A549 (cell line): ENCODE measurements at regions of chr11 and their contacts with region 1.

Region 1: GRCh38 chr11:2036863-2037486 is 39.3 kb upstream of the H19 start:
- DNase-seq: no peak
- ATAC-seq: peak; percentile 44 to 85; a peak in 3 of 6 replicates
- H3K4me3 ChIP-seq: no peak overlapping the region
- H3K27ac ChIP-seq: no peak overlapping the region
- H3K4me1 ChIP-seq: no peaks in the 10 kb centered on the region
- CTCF ChIP-seq: no peak
- EP300 ChIP-seq: no peak
- POLR2A ChIP-seq: no peak
- RAD21 ChIP-seq: no peak

Region 2: GRCh38 chr11:1714973-1715885 is 321.7 kb before region 1 on chr11:
- CTCF ChIA-PET with region 1: no interaction called
- POLR2A ChIA-PET with region 1: no interaction called
- DNase-seq: no peak
- ATAC-seq: no peak
- H3K4me3 ChIP-seq: no peak overlapping the region
- H3K27ac ChIP-seq: no peak overlapping the region
- H3K4me1 ChIP-seq: no peaks in the 10 kb centered on the region
- CTCF ChIP-seq: no peak
- EP300 ChIP-seq: no peak
- POLR2A ChIP-seq: no peak
- RAD21 ChIP-seq: no peak

Region 3: DNA sequence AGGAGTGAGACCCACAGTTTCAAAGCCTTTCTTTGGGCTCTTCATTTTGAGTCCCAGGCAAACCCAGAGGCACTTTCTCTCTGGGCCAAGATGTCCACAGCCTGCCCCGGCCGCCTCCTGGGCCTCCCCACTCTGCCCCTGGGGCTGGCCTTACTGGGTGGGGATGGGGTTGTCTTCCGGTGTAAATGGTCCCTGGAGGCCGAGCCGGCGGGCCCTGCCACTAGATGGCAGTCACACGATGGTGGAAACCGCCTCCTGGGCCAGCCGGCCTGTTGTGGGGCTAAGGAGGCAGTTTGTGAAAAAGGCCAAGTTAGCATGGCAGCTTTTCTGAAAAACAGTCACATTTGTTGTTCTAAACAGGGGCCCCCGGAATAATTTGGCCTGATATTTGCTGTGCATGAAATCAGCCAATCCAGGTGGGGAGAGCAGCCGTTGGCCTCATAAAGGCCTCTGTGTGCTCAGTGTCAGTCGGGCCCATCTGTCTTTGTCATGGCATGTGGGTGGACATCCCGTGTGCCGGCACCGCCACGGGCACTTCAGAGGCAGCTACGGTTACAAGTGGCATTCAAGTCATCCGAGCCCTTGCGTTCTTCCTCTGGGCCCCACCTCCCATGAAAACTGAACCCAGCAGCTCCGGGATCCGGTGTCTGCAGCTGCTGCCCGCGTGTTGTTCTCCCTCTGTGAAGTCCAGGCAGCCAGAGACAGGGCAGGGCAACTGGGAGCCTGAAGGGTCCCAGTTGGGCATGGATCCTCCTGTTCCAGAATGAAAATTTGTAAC is 83.3 kb before region 1 on chr11:
- CTCF ChIA-PET with region 1: interaction called, 16 read pairs
- POLR2A ChIA-PET with region 1: no interaction called
- DNase-seq: no peak
- ATAC-seq: peak; percentile 86 to 95
- H3K4me3 ChIP-seq: no peak overlapping the region
- H3K27ac ChIP-seq: no peak overlapping the region
- H3K4me1 ChIP-seq: no peaks in the 10 kb centered on the region
- CTCF ChIP-seq: peak; percentile 22; the same call in 2 of the 3 replicates
- EP300 ChIP-seq: no peak
- POLR2A ChIP-seq: no peak
- RAD21 ChIP-seq: no peak

Region 4: GRCh38 chr11:1970956-1971355 is 66.0 kb before region 1 on chr11:
- CTCF ChIA-PET with region 1: interaction called, 12 read pairs
- POLR2A ChIA-PET with region 1: no interaction called
- DNase-seq: peak in 1 of 2 experiments; percentile 0
- ATAC-seq: no peak
- H3K4me3 ChIP-seq: no peak overlapping the region
- H3K27ac ChIP-seq: no peak overlapping the region
- H3K4me1 ChIP-seq: no peaks in the 10 kb centered on the region
- CTCF ChIP-seq: no peak
- EP300 ChIP-seq: no peak
- POLR2A ChIP-seq: no peak
- RAD21 ChIP-seq: no peak

Region 5: DNA sequence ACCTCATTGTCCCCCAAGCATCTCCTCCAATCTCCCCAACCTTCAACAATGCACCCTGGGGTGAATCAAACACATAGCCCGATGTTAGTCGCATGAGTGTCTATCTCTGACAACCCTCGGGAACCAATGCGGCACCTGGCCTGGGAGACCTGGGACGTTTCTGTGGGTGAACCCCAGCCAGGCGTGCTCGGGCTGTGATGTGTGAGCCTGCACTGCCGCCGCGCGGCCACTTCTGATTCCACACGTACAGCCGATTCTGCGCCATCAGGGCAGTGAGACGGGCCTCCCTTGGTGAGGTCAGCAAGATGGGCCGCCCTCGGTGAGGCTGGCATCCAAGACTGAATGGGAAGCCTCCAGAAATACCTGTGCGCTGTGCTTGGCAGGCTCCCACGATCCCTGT is 34.2 kb before region 1 on chr11:
- CTCF ChIA-PET with region 1: interaction called, 10 read pairs
- POLR2A ChIA-PET with region 1: no interaction called
- DNase-seq: no peak
- ATAC-seq: peak; percentile 49 to 72; a peak in 4 of 6 replicates
- H3K4me3 ChIP-seq: no peak overlapping the region
- H3K27ac ChIP-seq: no peak overlapping the region
- H3K4me1 ChIP-seq: no peaks in the 10 kb centered on the region
- CTCF ChIP-seq: no peak
- EP300 ChIP-seq: no peak
- POLR2A ChIP-seq: no peak
- RAD21 ChIP-seq: no peak

Region 6: GRCh38 chr11:2092956-2093412 is 56.0 kb after region 1 on chr11:
- CTCF ChIA-PET with region 1: interaction called, 14 read pairs
- POLR2A ChIA-PET with region 1: no interaction called
- DNase-seq: no peak
- ATAC-seq: no peak
- H3K4me3 ChIP-seq: no peak overlapping the region
- H3K27ac ChIP-seq: no peak overlapping the region
- H3K4me1 ChIP-seq: no peaks in the 10 kb centered on the region
- CTCF ChIP-seq: no peak
- EP300 ChIP-seq: no peak
- POLR2A ChIP-seq: no peak
- RAD21 ChIP-seq: no peak

Region 7: GRCh38 chr11:2137202-2138071 is 100.5 kb after region 1 on chr11:
- CTCF ChIA-PET with region 1: interaction called, 1,333 read pairs
- POLR2A ChIA-PET with region 1: no interaction called
- DNase-seq: peak; percentile 76 to 91
- ATAC-seq: peak; percentile 69 to 89
- H3K4me3 ChIP-seq: peak overlapping the region; percentile 52
- H3K27ac ChIP-seq: peak overlapping the region; percentile 17 to 65; a peak in 4 of 6 replicates
- H3K4me1 ChIP-seq: peaks cover 19% of the 10 kb centered on the region
- CTCF ChIP-seq: no peak
- EP300 ChIP-seq: no peak
- POLR2A ChIP-seq: no peak
- RAD21 ChIP-seq: no peak